Mammary epithelial cell (primary cell): ENCODE measurements at regions of chr4 and their contacts with region 1.

Region 1: DNA sequence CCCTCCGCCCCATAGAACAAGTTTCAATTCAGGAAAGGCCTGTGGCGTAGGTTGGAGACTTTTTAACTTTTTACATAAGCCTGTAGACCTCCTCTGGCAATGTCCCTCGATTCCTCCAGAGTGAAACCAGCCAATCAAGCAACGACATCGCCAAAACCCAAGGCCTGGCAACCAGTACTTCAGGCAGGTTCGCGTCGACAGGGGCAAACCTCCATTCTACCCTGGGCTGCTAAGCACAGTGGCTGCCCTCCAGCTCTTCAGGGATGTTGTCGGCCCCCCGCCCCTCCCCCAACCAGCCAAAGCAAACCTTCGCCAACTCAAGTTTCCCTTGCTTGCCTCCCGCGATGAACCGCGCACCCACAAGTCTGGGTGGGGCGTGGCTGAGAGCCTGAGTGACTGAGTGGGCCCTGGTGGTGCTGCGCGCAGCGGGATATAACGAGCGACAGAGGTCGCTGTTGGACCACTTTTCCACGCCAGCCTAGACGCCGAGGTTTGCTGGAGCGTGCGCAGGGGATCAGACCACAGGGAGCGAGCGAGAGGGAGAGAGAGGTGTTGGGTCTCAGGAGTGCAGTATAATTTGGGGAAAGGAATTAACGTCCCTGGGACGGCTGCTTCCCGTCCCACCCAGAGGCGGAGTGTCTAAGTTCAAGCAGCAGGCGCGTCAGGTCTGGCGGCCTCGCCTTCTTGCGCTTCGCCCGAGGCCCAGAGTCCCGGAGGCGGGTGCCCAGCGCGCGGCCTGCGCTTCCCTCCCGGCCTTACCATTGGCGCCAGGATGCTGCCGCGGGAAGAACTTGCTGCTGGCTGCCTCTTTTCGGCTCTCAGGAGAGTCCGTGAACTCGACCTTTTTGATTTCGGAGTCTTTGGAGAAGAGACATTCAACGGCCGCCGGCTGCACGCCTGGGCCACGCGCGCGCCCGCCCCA is 9.0 kb upstream of the PITX2 start:
- DNase-seq: peak; percentile 56
- H3K4me3 ChIP-seq: peak overlapping the region; percentile 36 to 43 (median 40)
- H3K27ac ChIP-seq: no peak overlapping the region
- H3K4me1 ChIP-seq: peaks cover 13% of the 10 kb centered on the region
- H3K27me3 ChIP-seq: peaks cover 73% of the 10 kb centered on the region
- CTCF ChIP-seq: peak; percentile 70 to 86

Region 2: DNA sequence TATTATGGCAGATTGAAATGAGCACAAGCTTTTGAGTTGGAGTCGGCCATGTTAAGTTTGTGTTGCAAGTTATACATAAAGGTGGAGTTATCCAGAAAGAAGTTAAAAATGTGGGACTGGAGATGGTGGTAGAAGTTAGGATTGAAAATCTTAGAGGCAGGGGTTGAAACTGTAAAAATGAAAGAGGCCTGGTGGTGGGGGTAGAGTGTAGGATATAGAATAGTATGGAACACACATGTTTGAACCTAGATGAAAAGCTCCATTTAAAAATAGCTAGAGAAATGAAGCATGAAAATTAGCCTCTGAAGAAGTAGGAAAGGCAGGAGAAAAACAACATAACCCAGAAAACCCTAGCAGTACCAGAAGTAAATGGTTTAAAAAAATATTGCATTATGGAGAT is 287.7 kb before region 1 on chr4:
- CTCF ChIA-PET with region 1: no interaction called
- dilution Hi-C with region 1: no loop called
- in situ Hi-C with region 1: no loop called
- intact Hi-C with region 1: no loop called
- DNase-seq: no peak
- H3K4me3 ChIP-seq: no peak overlapping the region
- H3K27ac ChIP-seq: no peak overlapping the region
- H3K4me1 ChIP-seq: no peaks in the 10 kb centered on the region
- H3K27me3 ChIP-seq: peaks cover 1% of the 10 kb centered on the region
- CTCF ChIP-seq: peak in 1 of 2 donors; percentile 27

Region 3: GRCh38 chr4:110970642-110971041 is 338.8 kb after region 1 on chr4:
- CTCF ChIA-PET with region 1: no interaction called
- dilution Hi-C with region 1: no loop called
- in situ Hi-C with region 1: loop called (anchors 25 kb)
- intact Hi-C with region 1: loop called (anchors 1 kb)
- DNase-seq: peak; percentile 32
- H3K4me3 ChIP-seq: no peak overlapping the region
- H3K27ac ChIP-seq: no peak overlapping the region
- H3K4me1 ChIP-seq: no peaks in the 10 kb centered on the region
- H3K27me3 ChIP-seq: peaks cover 2% of the 10 kb centered on the region
- CTCF ChIP-seq: peak; percentile 68 to 74

Region 4: DNA sequence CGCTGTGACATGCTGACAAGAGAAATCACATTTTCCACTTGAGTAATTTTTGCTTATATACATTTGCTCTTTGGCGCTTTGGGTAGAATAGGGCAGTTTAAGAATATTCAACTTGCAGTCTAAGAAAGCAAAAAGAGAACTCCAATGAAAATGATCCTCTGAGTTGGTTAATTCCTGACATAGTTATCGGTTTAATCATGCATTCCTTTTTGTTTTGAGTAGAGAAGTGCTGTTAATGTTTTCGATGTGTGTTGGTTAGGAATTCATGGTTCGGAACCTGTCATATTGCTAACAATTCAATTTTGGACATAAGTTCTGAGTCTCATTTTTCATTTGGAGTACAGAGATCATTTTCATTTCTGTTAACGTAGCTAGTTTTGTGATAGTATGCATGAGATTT is 691.7 kb after region 1 on chr4:
- CTCF ChIA-PET with region 1: no interaction called
- dilution Hi-C with region 1: no loop called
- in situ Hi-C with region 1: loop called in 1 of 2 experiments (anchors 25 kb)
- intact Hi-C with region 1: no loop called
- DNase-seq: no peak
- H3K4me3 ChIP-seq: no peak overlapping the region
- H3K27ac ChIP-seq: no peak overlapping the region
- H3K4me1 ChIP-seq: no peaks in the 10 kb centered on the region
- H3K27me3 ChIP-seq: no peaks in the 10 kb centered on the region
- CTCF ChIP-seq: no peak

Region 5: GRCh38 chr4:111641955-111642579 is 1010.2 kb after region 1 on chr4:
- CTCF ChIA-PET with region 1: no interaction called
- dilution Hi-C with region 1: no loop called
- in situ Hi-C with region 1: loop called (anchors 25 kb)
- intact Hi-C with region 1: no loop called
- DNase-seq: peak; percentile 68
- H3K4me3 ChIP-seq: no peak overlapping the region
- H3K27ac ChIP-seq: no peak overlapping the region
- H3K4me1 ChIP-seq: no peaks in the 10 kb centered on the region
- H3K27me3 ChIP-seq: no peaks in the 10 kb centered on the region
- CTCF ChIP-seq: peak; percentile 91 to 92